ENCODE measurements at regions of chr2 and their contacts with region 1.

Region 1: GRCh38 chr2:127810619-127811396 is at the start of gene WDR33:
- DNase-seq: peak; percentile 87 to 95
- H3K4me3 ChIP-seq: peak within 1 kb of the TSS; percentile 89
- H3K27ac ChIP-seq: peak within 1 kb of the TSS; percentile 71
- H3K4me1 ChIP-seq: peaks cover 37% of the 10 kb centered on the region
- H3K27me3 ChIP-seq: no peaks in the 10 kb centered on the region
- CTCF ChIP-seq: no peak
- total RNA-seq, gene WDR33: 53.7 and 59.3 TPM in 2 replicates

Region 2: DNA sequence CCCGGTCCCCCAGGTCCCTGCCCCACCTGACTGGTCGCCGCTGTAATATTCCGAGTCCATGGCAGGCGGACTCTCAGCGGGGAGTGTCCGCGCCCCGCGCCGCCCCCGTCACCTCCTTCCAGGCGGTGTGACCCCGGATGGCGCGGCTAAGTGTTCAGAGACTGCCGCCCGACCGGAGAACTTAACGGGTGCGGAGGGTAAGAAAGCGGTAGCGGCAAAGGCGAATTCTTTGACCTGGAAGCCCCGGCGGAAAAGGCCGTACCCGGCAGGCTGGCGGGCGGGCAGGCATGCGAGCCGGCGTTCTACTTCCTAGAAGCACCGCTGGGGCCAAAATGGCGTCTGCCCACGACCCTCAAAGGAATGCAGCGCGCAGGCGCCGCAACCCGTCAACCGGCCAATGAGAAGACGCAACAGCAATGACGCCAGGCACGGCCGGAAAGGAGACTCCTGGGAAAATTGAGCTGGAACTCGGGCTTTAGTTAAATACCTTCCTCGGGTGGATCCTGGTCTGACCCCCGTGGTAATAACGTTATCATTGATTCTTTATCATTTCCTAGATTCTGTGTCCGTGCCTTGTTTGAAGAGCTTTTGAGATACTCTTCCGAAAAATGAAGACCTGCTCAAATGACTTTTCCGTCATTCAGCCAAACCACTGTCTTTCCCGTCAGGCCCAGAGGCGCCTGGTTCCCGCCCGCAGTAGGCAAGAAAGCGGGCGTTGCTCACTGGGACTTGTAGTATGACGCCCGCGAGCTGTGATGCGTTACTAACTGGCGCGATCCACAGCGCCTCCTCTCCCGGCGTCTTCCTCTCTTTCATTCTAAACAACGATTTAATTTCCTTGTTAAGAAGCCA is 284.4 kb before region 1 on chr2 and contains the start of gene IWS1:
- CTCF ChIA-PET with region 1: no interaction called
- POLR2A ChIA-PET with region 1: no interaction called
- intact Hi-C with region 1: loop called (anchors 5 kb)
- DNase-seq: peak; percentile 95
- H3K4me3 ChIP-seq: peak within 1 kb of the TSS; percentile 88
- H3K27ac ChIP-seq: peak within 1 kb of the TSS; percentile 97
- H3K4me1 ChIP-seq: peaks cover 43% of the 10 kb centered on the region
- H3K27me3 ChIP-seq: no peaks in the 10 kb centered on the region
- CTCF ChIP-seq: no peak; the same call in 1 of the 2 replicates
- total RNA-seq, gene IWS1: 47.3 and 51.3 TPM in 2 replicates

Region 3: GRCh38 chr2:127551221-127551930 is 259.4 kb before region 1 on chr2:
- CTCF ChIA-PET with region 1: no interaction called
- POLR2A ChIA-PET with region 1: no interaction called
- intact Hi-C with region 1: no loop called
- DNase-seq: no peak
- H3K4me3 ChIP-seq: no peak overlapping the region
- H3K27ac ChIP-seq: no peak overlapping the region
- H3K4me1 ChIP-seq: no peaks in the 10 kb centered on the region
- H3K27me3 ChIP-seq: peaks cover 71% of the 10 kb centered on the region
- CTCF ChIP-seq: no peak

Region 4: GRCh38 chr2:127701193-127701650 is 109.6 kb before region 1 on chr2 and contains the start of gene SFT2D3:
- CTCF ChIA-PET with region 1: no interaction called
- POLR2A ChIA-PET with region 1: no interaction called
- intact Hi-C with region 1: loop called (anchors 5 kb)
- DNase-seq: peak; percentile 89 to 93
- H3K4me3 ChIP-seq: peak within 1 kb of the TSS; percentile 66
- H3K27ac ChIP-seq: peak within 1 kb of the TSS; percentile 94
- H3K4me1 ChIP-seq: peaks cover 32% of the 10 kb centered on the region
- H3K27me3 ChIP-seq: no peaks in the 10 kb centered on the region
- CTCF ChIP-seq: no peak
- total RNA-seq, gene SFT2D3: 7.3 and 8.4 TPM in 2 replicates

Region 5: DNA sequence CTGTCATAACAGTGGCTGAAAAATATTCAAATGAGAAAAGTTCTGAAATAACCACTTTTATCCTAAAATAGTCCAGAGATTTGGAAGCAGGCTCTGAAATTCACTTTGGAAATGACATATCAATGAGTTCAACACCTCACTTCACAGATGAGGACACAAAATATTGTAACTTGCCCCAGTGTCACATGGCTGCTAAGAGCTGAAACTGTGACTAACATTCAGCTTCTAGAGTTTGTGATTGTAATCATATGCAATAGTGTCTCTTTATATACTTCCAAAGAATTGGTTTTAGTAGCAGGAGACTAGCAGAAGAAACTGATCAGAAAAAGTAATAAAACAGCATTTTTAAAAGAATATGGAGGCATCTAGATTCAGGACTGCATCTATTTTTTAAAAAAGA is 57.4 kb before region 1 on chr2:
- CTCF ChIA-PET with region 1: no interaction called
- POLR2A ChIA-PET with region 1: interaction called, 12 read pairs
- intact Hi-C with region 1: no loop called
- DNase-seq: peak in 1 of 2 experiments; percentile 13
- H3K4me3 ChIP-seq: no peak overlapping the region
- H3K27ac ChIP-seq: no peak overlapping the region
- H3K4me1 ChIP-seq: no peaks in the 10 kb centered on the region
- H3K27me3 ChIP-seq: no peaks in the 10 kb centered on the region
- CTCF ChIP-seq: no peak

Region 6: GRCh38 chr2:127770973-127771735 is 39.7 kb before region 1 on chr2:
- CTCF ChIA-PET with region 1: no interaction called
- POLR2A ChIA-PET with region 1: no interaction called
- intact Hi-C with region 1: loop called (anchors 2 kb)
- DNase-seq: peak in 1 of 2 experiments; percentile 78
- H3K4me3 ChIP-seq: no peak overlapping the region
- H3K27ac ChIP-seq: peak overlapping the region; percentile 49
- H3K4me1 ChIP-seq: peaks cover 21% of the 10 kb centered on the region; the same call in 1 of the 2 replicates
- H3K27me3 ChIP-seq: no peaks in the 10 kb centered on the region
- CTCF ChIP-seq: no peak

Region 7: GRCh38 chr2:127857265-127857808 is 46.5 kb after region 1 on chr2:
- CTCF ChIA-PET with region 1: no interaction called
- POLR2A ChIA-PET with region 1: interaction called, 9 read pairs
- intact Hi-C with region 1: loop called (anchors 5 kb)
- DNase-seq: peak in 1 of 2 experiments; percentile 11
- H3K4me3 ChIP-seq: peak overlapping the region; percentile 99
- H3K27ac ChIP-seq: peak overlapping the region; percentile 18; the same call in 1 of the 2 replicates
- H3K4me1 ChIP-seq: peaks cover 15% of the 10 kb centered on the region
- H3K27me3 ChIP-seq: no peaks in the 10 kb centered on the region
- CTCF ChIP-seq: no peak

Region 8: DNA sequence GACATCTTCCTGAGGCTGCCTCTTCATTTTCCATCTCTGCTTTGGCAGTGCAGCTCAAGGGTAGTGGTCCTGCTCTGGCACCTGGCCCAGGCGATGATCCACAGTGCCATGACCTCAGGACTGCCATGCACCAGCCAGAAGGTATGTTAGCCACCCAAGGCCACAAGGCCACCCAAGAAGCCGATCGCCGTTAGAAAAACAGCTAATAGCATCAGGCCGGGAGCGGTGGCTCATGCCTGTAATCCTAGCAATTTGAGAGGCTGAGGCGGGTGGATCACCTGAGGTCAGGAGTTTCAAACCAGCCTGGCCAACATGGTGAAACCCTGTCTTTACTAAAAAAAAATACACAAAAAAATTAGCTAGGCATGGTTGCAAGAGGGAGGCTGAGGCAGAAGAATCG is 251.8 kb after region 1 on chr2:
- CTCF ChIA-PET with region 1: interaction called, 11 read pairs
- POLR2A ChIA-PET with region 1: no interaction called
- intact Hi-C with region 1: no loop called
- DNase-seq: no peak
- H3K4me3 ChIP-seq: no peak overlapping the region
- H3K27ac ChIP-seq: no peak overlapping the region
- H3K4me1 ChIP-seq: no peaks in the 10 kb centered on the region
- H3K27me3 ChIP-seq: no peaks in the 10 kb centered on the region
- CTCF ChIP-seq: no peak

Region 9: DNA sequence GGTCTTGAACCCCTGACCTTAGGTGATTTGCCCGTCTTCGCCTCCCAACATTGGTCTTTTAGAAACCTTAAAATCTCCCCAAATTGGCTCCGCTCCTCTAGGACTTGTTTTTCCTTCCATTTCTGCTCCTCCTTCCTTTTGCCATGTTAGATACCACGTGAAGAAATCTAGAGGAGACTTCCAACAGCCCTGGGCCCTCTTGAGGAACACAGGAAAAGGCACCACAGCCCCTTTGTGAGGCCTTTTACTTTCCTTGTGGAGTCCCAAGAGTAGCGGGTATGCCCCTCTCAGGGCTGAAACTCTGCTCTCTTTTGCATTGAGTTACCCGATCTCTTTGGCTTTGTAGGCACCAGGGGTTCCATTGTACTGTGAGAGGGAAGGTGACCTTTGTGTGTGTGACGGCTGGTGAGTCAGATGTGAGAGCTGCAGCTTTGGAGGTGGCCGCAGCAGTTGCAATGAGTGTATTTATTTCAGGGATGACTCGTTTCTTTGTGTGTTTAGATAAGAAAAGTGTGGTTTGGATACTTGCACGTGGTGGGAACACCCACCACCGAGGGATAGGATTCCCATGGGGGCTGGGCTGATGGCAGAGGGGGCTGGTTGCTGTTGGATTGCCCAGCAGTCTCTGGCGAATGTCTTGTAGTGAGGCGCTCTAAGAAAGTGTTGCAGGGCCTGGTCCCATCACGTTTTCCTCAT is 726.3 kb after region 1 on chr2:
- CTCF ChIA-PET with region 1: no interaction called
- POLR2A ChIA-PET with region 1: no interaction called
- intact Hi-C with region 1: no loop called
- DNase-seq: peak; percentile 35 to 91
- H3K4me3 ChIP-seq: no peak overlapping the region
- H3K27ac ChIP-seq: peak overlapping the region; percentile 62
- H3K4me1 ChIP-seq: peaks cover 26% of the 10 kb centered on the region
- H3K27me3 ChIP-seq: no peaks in the 10 kb centered on the region
- CTCF ChIP-seq: no peak

Measured in PC-9 (cell line).